Mammary epithelial cell (primary cell): ENCODE measurements at regions of chr3 and their contacts with region 1.

Region 1: GRCh38 chr3:128123538-128124368 is at the start of gene RUVBL1:
- DNase-seq: peak; percentile 97
- H3K4me3 ChIP-seq: peak within 1 kb of the TSS; percentile 98 to 100 (median 98)
- H3K27ac ChIP-seq: peak within 1 kb of the TSS; percentile 88
- H3K4me1 ChIP-seq: peaks cover 11% of the 10 kb centered on the region
- H3K27me3 ChIP-seq: no peaks in the 10 kb centered on the region
- CTCF ChIP-seq: no peak
- total RNA-seq, gene RUVBL1: 53.7 to 78.8 TPM

Region 2: DNA sequence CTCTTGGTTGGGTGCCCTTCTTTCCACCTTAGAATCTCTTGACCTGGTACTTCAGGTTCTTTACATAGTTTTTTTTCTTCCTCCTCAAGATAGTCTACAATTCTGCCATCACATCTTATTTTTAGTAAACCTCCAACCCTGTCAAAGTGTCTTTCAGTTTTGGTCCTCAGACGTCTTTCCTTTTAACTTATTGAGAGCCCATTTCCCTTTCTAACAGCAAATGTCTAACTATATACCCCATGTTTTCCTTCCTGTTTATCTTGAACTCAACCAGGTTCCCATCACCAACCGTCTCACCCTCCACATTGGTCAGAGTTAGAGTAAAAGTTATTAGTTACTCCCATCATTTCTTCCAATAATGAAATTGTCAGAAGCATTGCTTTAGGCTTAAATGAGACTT is 198.4 kb before region 1 on chr3:
- CTCF ChIA-PET with region 1: no interaction called
- dilution Hi-C with region 1: no loop called
- in situ Hi-C with region 1: no loop called
- intact Hi-C with region 1: no loop called
- DNase-seq: no peak
- H3K4me3 ChIP-seq: no peak overlapping the region
- H3K27ac ChIP-seq: no peak overlapping the region
- H3K4me1 ChIP-seq: no peaks in the 10 kb centered on the region
- H3K27me3 ChIP-seq: no peaks in the 10 kb centered on the region
- CTCF ChIP-seq: no peak

Region 3: GRCh38 chr3:128060473-128061381 is 63.0 kb before region 1 on chr3:
- CTCF ChIA-PET with region 1: no interaction called
- dilution Hi-C with region 1: no loop called
- in situ Hi-C with region 1: no loop called
- intact Hi-C with region 1: no loop called
- DNase-seq: peak; percentile 91
- H3K4me3 ChIP-seq: no peak overlapping the region
- H3K27ac ChIP-seq: peak overlapping the region; percentile 70
- H3K4me1 ChIP-seq: peaks cover 27% of the 10 kb centered on the region
- H3K27me3 ChIP-seq: no peaks in the 10 kb centered on the region
- CTCF ChIP-seq: no peak

Region 4: DNA sequence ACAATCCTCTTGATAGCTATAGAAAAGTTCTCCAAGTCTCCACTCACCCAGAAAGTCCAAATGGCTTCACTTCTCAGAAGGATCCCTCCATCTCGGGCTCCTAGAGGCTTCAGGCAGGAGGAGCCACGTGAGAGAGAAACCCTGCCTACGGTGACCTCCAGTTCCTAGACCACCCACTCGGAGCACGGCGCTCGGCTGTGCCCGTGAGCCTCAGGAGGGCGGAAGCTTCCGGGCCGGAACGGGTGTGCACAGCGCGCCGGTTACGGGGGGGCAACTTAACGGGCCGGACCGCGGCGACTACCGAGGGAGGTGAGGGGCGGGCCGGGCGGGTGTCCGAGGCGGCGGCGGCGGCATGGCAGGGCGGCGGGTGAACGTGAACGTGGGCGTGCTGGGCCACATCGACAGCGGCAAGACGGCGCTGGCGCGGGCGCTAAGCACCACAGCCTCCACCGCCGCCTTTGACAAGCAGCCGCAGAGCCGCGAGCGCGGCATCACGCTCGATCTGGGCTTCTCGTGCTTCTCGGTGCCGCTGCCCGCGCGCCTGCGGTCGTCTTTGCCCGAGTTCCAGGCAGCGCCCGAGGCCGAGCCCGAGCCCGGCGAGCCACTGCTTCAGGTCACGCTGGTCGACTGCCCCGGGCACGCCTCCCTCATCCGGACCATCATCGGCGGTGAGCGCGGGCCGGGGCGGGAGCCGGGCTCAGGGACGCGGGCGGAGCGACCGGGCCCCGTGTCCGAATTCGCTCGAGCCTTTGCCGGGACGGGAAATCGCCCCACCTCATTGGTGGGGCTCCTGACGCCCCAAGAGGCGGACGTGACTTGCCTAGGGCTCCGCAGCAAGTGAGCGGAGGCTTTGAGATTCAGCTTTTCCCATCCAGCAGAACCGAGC is 29.6 kb after region 1 on chr3 and contains the start of gene EEFSEC:
- CTCF ChIA-PET with region 1: no interaction called
- dilution Hi-C with region 1: no loop called
- in situ Hi-C with region 1: no loop called
- intact Hi-C with region 1: loop called (anchors 1 kb)
- DNase-seq: peak; percentile 83
- H3K4me3 ChIP-seq: peak within 1 kb of the TSS; percentile 89 to 97 (median 90)
- H3K27ac ChIP-seq: peak within 1 kb of the TSS; percentile 78
- H3K4me1 ChIP-seq: peaks cover 5% of the 10 kb centered on the region
- H3K27me3 ChIP-seq: no peaks in the 10 kb centered on the region
- CTCF ChIP-seq: no peak
- total RNA-seq, gene EEFSEC: 7.0 to 15.9 TPM